Posterior cingulate gyrus (tissue), 11 donors: ENCODE measurements at regions of chr17 and their contacts with region 1.

Region 1: GRCh38 chr17:42120770-42121769 is at the start of gene KAT2A:
- DNase-seq: peak; percentile 82 to 98 (median 88)

Region 2: DNA sequence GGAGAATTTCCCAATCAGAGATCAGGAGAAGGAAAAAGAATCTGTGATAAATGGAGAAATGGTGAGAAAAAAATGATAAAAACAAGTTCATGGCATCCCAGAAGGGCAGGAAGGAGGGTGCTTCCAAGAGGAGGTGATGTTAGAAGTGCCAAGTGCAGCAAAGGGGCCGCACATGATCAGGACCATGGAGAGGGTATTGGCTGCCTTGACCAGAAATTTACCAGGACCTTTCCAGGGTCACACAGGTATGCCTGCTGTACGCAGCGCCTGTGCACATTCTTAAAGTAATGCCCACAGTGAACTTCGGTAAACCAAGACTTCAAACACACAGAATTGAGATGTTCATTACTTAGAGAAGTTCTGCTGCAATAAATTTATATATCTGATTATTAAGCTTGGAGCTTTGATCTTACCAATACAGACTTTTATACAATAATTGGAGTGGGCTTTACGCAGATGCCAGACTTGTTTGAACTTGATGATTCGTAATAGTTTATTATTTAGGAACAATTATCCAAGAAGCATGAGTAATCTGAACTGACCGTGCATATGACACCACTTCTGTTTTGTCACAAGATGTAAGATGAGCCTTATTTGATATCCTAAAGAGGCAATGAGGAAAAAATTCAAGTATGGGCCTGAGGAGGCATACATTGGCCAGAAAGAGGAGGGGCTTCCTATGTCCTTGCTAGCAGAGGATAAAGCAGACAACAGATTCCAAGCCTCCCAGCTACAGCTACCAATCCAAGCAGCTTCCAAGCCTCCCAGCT is 768.3 kb before region 1 on chr17:
- intact Hi-C with region 1: no loop called
- DNase-seq: no peak

Region 3: GRCh38 chr17:42025191-42025579 is 95.9 kb before region 1 on chr17:
- intact Hi-C with region 1: loop called (anchors 1 kb)
- DNase-seq: peak in 1 of 10 donors; percentile 55

Region 4: DNA sequence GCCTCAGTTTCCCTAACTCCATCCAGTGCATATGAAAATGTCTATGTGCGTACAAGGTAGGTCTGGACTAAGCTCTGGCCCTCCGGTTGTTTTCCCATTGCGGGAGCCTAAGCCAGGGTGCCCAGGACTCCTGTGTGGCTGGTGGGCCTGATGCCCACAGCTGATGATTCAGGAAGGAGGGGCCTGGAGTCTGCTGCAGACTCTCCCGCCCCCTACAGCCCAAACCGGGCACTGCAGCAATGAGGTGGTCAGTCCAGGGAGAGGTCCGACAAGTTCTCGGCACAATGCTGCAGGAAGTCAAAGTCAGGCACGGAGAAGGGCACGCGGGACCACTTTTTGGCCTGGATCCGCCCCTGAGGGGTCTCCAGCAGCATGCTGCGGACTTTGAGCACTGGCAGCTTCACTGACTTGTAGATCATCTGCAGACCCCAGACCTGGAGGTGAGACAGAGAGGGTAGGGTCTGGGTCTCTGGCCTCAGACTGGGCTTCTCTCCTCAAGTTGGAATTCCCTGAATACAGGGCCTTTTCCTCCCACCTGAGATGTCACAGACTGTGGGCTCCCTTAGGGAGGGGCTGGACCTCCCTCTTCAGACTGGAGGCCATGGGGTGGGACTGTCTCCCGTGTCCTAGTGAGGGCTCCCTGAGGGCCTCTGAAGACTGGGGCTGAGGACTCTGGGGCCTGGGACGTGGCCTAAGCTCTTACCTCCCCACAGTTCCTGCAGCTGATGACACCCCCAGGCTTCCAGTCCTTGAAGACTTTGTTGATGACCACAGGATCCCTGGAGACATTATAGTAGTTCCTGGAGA is 19.4 kb before region 1 on chr17:
- intact Hi-C with region 1: no loop called
- DNase-seq: peak; percentile 57 to 95 (median 82)

Region 5: GRCh38 chr17:42153919-42154742 is 33.1 kb after region 1 on chr17:
- intact Hi-C with region 1: loop called (anchors 1 kb)
- DNase-seq: peak in 1 of 10 donors; percentile 6

Region 6: GRCh38 chr17:42183741-42184711 is 63.0 kb after region 1 on chr17:
- intact Hi-C with region 1: loop called (anchors 5 kb)
- DNase-seq: peak; percentile 48 to 97 (median 70)